ENCODE measurements at regions of chr6 and their contacts with region 1.

Region 1: DNA sequence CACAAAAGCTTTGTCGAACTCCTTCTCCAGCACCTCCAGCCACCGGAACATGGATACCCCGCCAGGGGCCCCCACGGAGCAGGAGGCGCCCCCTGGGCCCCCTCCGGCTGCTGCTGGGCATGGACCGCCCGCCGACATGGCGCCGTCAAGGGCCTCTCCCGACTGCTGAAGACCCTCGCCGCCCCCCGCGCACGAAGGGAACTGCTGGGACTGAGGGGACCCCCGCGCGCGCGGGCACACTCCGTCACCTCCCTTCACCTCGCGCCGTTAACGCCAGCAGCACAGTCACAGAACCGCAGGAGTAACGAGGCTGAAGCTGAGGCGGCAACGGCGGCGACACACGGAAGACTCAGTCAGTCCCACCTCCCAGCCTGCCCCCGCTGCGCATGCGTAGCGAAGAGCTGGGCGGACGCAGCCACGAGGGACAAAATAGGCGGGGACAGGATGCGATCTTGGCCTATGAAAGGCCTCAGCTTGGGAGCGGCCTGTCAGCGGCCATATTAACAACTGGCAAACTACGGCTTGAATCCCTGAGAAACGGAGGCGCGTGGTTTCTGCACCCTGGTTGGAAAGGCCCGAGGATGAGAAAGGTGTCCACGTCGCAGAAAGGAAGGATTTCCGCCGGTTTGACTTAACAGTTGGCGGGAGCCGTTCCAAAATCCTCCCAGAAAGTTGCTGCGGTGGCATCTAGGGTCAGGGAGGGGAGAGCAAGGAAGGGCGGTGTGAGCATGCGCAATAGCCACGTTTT is at the start of gene GOPC:
- DNase-seq: peak; percentile 98
- H3K4me3 Mint-ChIP-seq: peak within 1 kb of the TSS; percentile 99
- H3K27ac Mint-ChIP-seq: peak within 1 kb of the TSS; percentile 100
- H3K4me1 Mint-ChIP-seq: peaks cover 31% of the 10 kb centered on the region
- H3K27me3 Mint-ChIP-seq: peaks cover 3% of the 10 kb centered on the region
- total RNA-seq, gene GOPC: 22.2 TPM in 2 replicates

Region 2: GRCh38 chr6:116667623-116668022 is 934.7 kb before region 1 on chr6:
- intact Hi-C with region 1: loop called (anchors 5 kb)
- DNase-seq: no peak
- H3K4me3 Mint-ChIP-seq: peak overlapping the region; percentile 94
- H3K27ac Mint-ChIP-seq: peak overlapping the region; percentile 98
- H3K4me1 Mint-ChIP-seq: peaks cover 32% of the 10 kb centered on the region
- H3K27me3 Mint-ChIP-seq: peaks cover 19% of the 10 kb centered on the region

Region 3: GRCh38 chr6:117346142-117346930 is 256.0 kb before region 1 on chr6:
- intact Hi-C with region 1: loop called (anchors 1 kb)
- DNase-seq: no peak
- H3K4me3 Mint-ChIP-seq: no peak overlapping the region
- H3K27ac Mint-ChIP-seq: no peak overlapping the region
- H3K4me1 Mint-ChIP-seq: no peaks in the 10 kb centered on the region
- H3K27me3 Mint-ChIP-seq: peaks cover 7% of the 10 kb centered on the region

Region 4: DNA sequence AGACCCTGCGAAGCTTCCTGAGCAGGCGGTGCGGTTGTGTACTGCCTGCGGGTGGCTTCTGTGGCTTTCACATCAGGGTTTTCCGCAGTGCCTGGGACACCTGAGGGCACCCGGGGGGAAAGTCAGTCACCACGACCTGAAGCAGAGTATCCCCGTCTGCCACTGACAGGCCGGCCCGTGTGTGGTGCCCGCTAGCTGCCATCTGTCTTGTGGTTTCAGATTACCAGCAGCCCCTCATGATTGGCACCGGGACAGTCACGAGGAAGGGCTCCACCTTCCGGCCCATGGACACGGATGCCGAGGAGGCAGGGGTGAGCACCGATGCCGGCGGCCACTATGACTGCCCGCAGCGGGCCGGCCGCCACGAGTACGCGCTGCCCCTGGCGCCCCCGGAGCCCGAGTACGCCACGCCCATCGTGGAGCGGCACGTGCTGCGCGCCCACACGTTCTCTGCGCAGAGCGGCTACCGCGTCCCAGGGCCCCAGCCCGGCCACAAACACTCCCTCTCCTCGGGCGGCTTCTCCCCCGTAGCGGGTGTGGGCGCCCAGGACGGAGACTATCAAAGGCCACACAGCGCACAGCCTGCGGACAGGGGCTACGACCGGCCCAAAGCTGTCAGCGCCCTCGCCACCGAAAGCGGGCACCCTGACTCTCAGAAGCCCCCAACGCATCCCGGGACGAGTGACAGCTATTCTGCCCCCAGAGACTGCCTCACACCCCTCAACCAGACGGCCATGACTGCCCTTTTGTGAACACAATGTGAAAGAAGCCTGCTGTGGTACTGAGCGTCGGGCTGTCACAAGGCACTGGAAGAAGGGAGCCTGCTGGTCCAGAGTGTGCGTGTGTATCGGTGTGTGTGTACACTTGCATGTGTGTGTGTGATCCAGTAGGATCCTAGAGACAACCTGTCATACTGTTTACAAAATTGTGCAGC is 54.4 kb before region 1 on chr6:
- intact Hi-C with region 1: loop called (anchors 1 kb)
- DNase-seq: peak; percentile 81
- H3K4me3 Mint-ChIP-seq: peak overlapping the region; percentile 81
- H3K27ac Mint-ChIP-seq: peak overlapping the region; percentile 85
- H3K4me1 Mint-ChIP-seq: peaks cover 38% of the 10 kb centered on the region
- H3K27me3 Mint-ChIP-seq: peaks cover 10% of the 10 kb centered on the region

Region 5: DNA sequence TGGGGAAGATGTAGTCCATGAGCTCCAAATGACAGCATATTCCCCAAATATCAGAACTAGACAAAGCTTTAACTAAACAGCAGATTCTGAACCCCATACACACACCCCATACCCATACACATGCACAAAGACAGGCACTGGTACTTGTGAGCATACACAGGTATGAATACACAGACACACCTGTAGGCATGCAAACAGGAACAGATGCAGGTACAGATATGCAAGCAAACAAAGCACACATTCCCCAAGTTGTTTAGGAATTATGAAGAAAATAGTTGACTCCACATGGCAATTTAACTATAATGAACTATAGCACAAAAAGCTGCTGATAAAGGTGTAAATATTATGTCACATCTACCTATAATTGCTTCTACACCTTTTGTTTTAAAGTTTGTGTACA is 16.7 kb before region 1 on chr6:
- intact Hi-C with region 1: no loop called
- DNase-seq: no peak
- H3K4me3 Mint-ChIP-seq: no peak overlapping the region
- H3K27ac Mint-ChIP-seq: no peak overlapping the region
- H3K4me1 Mint-ChIP-seq: peaks cover 12% of the 10 kb centered on the region
- H3K27me3 Mint-ChIP-seq: no peaks in the 10 kb centered on the region

Region 6: GRCh38 chr6:117674991-117675657 is 72.8 kb after region 1 on chr6 and contains the start of gene NUS1:
- intact Hi-C with region 1: loop called (anchors 2 kb)
- DNase-seq: peak; percentile 99
- H3K4me3 Mint-ChIP-seq: peak within 1 kb of the TSS; percentile 89
- H3K27ac Mint-ChIP-seq: peak within 1 kb of the TSS; percentile 93
- H3K4me1 Mint-ChIP-seq: peaks cover 45% of the 10 kb centered on the region
- H3K27me3 Mint-ChIP-seq: no peaks in the 10 kb centered on the region
- total RNA-seq, gene NUS1: 49.6 and 49.7 TPM in 2 replicates

Region 7: GRCh38 chr6:118277631-118278030 is 675.3 kb after region 1 on chr6:
- intact Hi-C with region 1: no loop called
- DNase-seq: no peak
- H3K4me3 Mint-ChIP-seq: no peak overlapping the region
- H3K27ac Mint-ChIP-seq: no peak overlapping the region
- H3K4me1 Mint-ChIP-seq: no peaks in the 10 kb centered on the region
- H3K27me3 Mint-ChIP-seq: peaks cover 25% of the 10 kb centered on the region